PC-3 (cell line): ENCODE measurements at regions of chr3 and their contacts with region 1.

Region 1: GRCh38 chr3:196073188-196073838 is 8.6 kb downstream of the TFRC start:
- DNase-seq: peak; percentile 74
- ATAC-seq: peak; percentile 99
- H3K4me3 ChIP-seq: no peak overlapping the region
- H3K27ac ChIP-seq: no peak overlapping the region
- H3K4me1 ChIP-seq: no peaks in the 10 kb centered on the region
- H3K27me3 ChIP-seq: no peaks in the 10 kb centered on the region
- CTCF ChIP-seq: peak; percentile 85

Region 2: GRCh38 chr3:196159952-196160804 is 86.9 kb after region 1 on chr3:
- CTCF ChIA-PET with region 1: interaction called, 4 read pairs
- POLR2A ChIA-PET with region 1: no interaction called
- intact Hi-C with region 1: loop called (anchors 2 kb)
- DNase-seq: peak; percentile 87
- ATAC-seq: peak; percentile 93
- H3K4me3 ChIP-seq: no peak overlapping the region
- H3K27ac ChIP-seq: peak overlapping the region; percentile 38
- H3K4me1 ChIP-seq: peaks cover 13% of the 10 kb centered on the region
- H3K27me3 ChIP-seq: no peaks in the 10 kb centered on the region
- CTCF ChIP-seq: no peak

Region 3: DNA sequence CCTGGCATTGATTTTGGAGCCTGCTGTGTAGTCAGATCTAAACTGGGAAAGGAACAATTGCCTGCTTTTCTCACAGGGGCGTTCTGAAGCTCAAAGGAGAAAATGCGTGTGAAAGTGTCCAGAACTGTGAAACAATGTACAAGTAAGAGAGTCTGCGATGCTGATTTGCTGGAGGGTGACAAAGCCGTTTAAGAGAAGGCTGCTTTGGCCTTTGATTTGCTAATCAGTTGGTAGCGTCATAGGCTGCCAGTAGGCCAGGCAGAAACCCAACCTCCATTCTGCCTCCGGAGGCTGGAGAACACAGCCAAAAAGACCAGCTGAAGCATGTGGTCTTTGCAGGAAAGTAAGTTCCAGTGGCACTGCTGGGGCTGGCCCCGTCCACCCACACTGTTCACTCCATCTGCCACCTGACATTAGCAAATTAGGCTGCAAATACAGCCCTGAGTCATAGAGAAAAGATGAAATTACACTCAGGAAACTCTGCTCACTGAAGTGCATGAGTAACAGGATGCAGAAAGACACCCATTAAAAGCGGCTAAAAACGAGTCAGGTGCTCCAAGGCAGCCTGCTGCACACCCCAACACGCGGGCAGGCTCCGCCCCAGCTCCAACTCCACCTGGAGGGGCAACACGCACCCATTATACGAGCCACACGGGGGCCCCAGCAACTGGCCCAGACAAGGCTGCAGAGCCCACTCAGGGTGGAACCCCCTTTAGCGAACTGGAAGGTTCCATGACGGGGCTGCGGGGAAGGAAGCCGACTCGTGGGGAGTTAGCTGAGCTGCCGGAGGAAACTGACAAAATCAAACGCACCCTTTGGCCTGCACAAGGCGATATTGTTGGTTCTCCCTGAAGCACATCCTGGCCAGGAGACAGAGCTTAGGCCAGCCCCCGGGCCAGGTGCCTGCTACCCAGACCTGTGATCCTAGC is 106.3 kb after region 1 on chr3:
- CTCF ChIA-PET with region 1: interaction called, 9 read pairs
- POLR2A ChIA-PET with region 1: interaction called, 12 read pairs
- intact Hi-C with region 1: no loop called
- DNase-seq: peak; percentile 73
- ATAC-seq: peak; percentile 88
- H3K4me3 ChIP-seq: no peak overlapping the region
- H3K27ac ChIP-seq: 0 out of 2 replicates have a peak overlapping the region, but pooled peaks have one; percentile 12
- H3K4me1 ChIP-seq: peaks cover 19% of the 10 kb centered on the region
- H3K27me3 ChIP-seq: no peaks in the 10 kb centered on the region
- CTCF ChIP-seq: no peak

Region 4: GRCh38 chr3:196198771-196199753 is 125.7 kb after region 1 on chr3:
- CTCF ChIA-PET with region 1: interaction called, 4 read pairs
- POLR2A ChIA-PET with region 1: no interaction called
- intact Hi-C with region 1: loop called (anchors 1 kb)
- DNase-seq: no peak
- ATAC-seq: no peak
- H3K4me3 ChIP-seq: no peak overlapping the region
- H3K27ac ChIP-seq: no peak overlapping the region
- H3K4me1 ChIP-seq: no peaks in the 10 kb centered on the region
- H3K27me3 ChIP-seq: no peaks in the 10 kb centered on the region
- CTCF ChIP-seq: peak; percentile 44